GM12878 (cell line): ENCODE measurements at regions of chr1 and their contacts with region 1.

Region 1: DNA sequence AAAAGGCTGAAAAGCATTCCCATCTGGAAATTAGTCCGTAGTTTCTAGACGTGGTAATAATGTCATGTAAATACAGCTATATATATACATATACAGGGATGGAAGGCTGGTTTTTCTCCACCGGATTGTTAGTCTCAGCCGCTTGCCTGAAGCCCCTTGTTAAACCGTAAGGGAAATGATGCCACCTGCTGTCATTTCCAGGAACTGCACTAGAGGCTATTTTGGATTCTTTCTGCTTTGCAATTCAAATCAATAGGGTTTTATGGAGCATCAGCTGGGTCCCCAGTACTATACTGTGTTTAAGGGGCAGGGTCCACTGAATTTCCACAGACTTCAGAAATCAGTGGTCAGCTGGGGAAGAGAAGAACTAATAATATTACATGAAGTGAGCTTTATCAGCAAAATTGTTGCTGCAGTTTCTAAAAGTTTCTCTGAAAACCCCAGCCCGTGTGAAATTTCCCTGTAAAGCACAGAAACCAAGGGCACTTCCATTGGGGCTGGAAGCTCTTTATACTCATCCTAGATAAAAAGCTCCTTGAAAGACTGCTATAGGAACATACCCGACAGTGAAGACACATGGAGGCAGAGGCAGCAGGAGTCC is 33.8 kb upstream of the MPZL1 start:
- DNase-seq: peak; percentile 80
- ATAC-seq: peak; percentile 90
- H3K4me3 ChIP-seq: no peak overlapping the region
- H3K27ac ChIP-seq: peak overlapping the region; percentile 30; the same call in 1 of the 2 replicates
- H3K4me1 ChIP-seq: peaks cover 9% of the 10 kb centered on the region
- H3K27me3 ChIP-seq: no peaks in the 10 kb centered on the region
- CTCF ChIP-seq: peak; percentile 83 to 94 (median 93)
- EP300 ChIP-seq: no peak
- POLR2A ChIP-seq: no peak
- RAD21 ChIP-seq: peak; percentile 99

Region 2: GRCh38 chr1:167553136-167554027 is 134.6 kb before region 1 on chr1 and contains the start of gene CREG1:
- CTCF ChIA-PET with region 1: interaction called, 71 read pairs
- POLR2A ChIA-PET with region 1: interaction called, 8 read pairs
- RAD21 ChIA-PET with region 1: interaction called, 13 read pairs
- SMC1A ChIA-PET with region 1: interaction called, 33 read pairs
- in situ Hi-C with region 1: no loop called
- intact Hi-C with region 1: loop called (anchors 1 kb)
- DNase-seq: no peak
- ATAC-seq: peak; percentile 97
- H3K4me3 ChIP-seq: peak within 1 kb of the TSS; percentile 72
- H3K27ac ChIP-seq: peak within 1 kb of the TSS; percentile 51
- H3K4me1 ChIP-seq: peaks cover 9% of the 10 kb centered on the region
- H3K27me3 ChIP-seq: no peaks in the 10 kb centered on the region
- CTCF ChIP-seq: no peak
- EP300 ChIP-seq: no peak
- POLR2A ChIP-seq: peak; percentile 93
- RAD21 ChIP-seq: no peak
- polyA plus RNA-seq, gene CREG1: 5.3 to 11.3 TPM

Region 3: DNA sequence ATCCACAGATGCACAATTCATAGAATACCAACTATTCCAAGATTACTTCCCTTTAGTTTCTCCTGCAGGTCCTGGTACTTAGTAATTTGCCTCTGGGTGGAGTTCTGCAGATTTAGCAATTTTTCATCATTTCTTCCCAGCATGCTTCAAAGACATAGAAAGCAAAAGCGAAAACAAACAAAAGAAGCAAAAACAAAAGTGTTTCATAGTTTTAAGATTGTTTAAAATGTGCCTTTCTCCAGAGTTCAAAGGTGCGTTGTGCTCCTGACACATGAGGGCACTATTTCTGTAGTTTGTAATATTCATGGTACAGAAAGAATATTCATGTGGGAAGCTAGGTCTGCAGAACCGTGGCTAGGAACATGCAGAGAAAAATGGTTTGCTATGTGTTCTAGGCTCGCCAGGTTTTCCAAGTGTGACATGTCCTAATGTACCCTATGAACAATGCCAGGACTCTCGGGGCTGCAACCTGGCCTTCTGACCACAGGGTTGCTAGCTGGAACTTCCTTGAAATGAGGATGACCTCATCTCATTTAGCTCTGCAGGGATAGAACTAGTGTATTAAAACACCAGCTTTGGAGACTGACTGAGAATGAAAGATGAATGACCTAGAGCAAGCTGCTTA is 88.0 kb before region 1 on chr1:
- CTCF ChIA-PET with region 1: interaction called, 255 read pairs
- POLR2A ChIA-PET with region 1: interaction called, 28 read pairs
- RAD21 ChIA-PET with region 1: interaction called, 182 read pairs
- SMC1A ChIA-PET with region 1: interaction called, 215 read pairs
- in situ Hi-C with region 1: loop called (anchors 5 kb)
- intact Hi-C with region 1: loop called (anchors 1 kb)
- DNase-seq: peak; percentile 79
- ATAC-seq: peak; percentile 93
- H3K4me3 ChIP-seq: peak overlapping the region; percentile 4; the same call in 1 of the 2 replicates
- H3K27ac ChIP-seq: peak overlapping the region; percentile 55
- H3K4me1 ChIP-seq: peaks cover 31% of the 10 kb centered on the region
- H3K27me3 ChIP-seq: no peaks in the 10 kb centered on the region
- CTCF ChIP-seq: peak; percentile 58 to 81 (median 80); a peak in 5 of 6 replicates
- EP300 ChIP-seq: no peak
- POLR2A ChIP-seq: no peak
- RAD21 ChIP-seq: peak; percentile 90

Region 4: DNA sequence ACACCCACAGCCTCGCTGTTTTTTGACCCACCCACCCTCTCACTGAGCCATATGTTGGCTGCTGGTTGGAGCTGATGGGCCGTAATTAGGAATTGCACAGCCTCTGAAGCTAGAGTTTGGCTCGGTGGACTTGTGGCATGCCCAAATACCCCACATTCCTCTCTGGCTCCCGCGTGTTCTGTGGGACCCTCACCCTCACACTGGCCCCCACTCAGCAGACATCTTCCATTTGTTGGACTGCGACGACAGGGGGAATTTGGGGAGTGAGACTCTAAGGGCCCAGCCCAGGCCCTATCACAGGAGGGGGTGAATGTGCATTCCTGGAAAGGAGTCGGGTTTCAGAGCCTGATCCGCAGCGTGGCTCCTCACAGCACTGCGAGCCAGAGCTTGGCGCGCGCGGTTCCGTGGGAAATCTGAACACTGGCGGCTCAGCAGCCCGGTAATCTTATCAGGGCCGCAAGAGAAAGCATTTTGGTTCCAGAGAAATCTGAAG is 52.8 kb before region 1 on chr1:
- CTCF ChIA-PET with region 1: interaction called, 67 read pairs
- POLR2A ChIA-PET with region 1: interaction called, 15 read pairs
- RAD21 ChIA-PET with region 1: interaction called, 61 read pairs
- SMC1A ChIA-PET with region 1: interaction called, 170 read pairs
- in situ Hi-C with region 1: no loop called
- intact Hi-C with region 1: loop called (anchors 2 kb)
- DNase-seq: no peak
- ATAC-seq: no peak
- H3K4me3 ChIP-seq: peak overlapping the region; percentile 41; the same call in 1 of the 2 replicates
- H3K27ac ChIP-seq: 0 out of 2 replicates have a peak overlapping the region, but pooled peaks have one; percentile 79
- H3K4me1 ChIP-seq: peaks cover 43% of the 10 kb centered on the region
- H3K27me3 ChIP-seq: no peaks in the 10 kb centered on the region
- CTCF ChIP-seq: no peak
- EP300 ChIP-seq: no peak
- POLR2A ChIP-seq: no peak
- RAD21 ChIP-seq: no peak

Region 5: GRCh38 chr1:167676205-167676915 is 11.7 kb before region 1 on chr1:
- CTCF ChIA-PET with region 1: interaction called, 31 read pairs
- POLR2A ChIA-PET with region 1: interaction called, 3 read pairs
- RAD21 ChIA-PET with region 1: interaction called, 15 read pairs
- SMC1A ChIA-PET with region 1: interaction called, 37 read pairs
- in situ Hi-C with region 1: no loop called
- intact Hi-C with region 1: no loop called
- DNase-seq: peak; percentile 88
- ATAC-seq: peak; percentile 76
- H3K4me3 ChIP-seq: peak overlapping the region; percentile 35; the same call in 1 of the 2 replicates
- H3K27ac ChIP-seq: peak overlapping the region; percentile 93
- H3K4me1 ChIP-seq: peaks cover 85% of the 10 kb centered on the region
- H3K27me3 ChIP-seq: no peaks in the 10 kb centered on the region
- CTCF ChIP-seq: peak in 2 of 3 experiments; percentile 5 to 12; a peak in 2 of 6 replicates
- EP300 ChIP-seq: peak; percentile 10 to 11; a peak in 1 of 4 replicates
- POLR2A ChIP-seq: no peak
- RAD21 ChIP-seq: no peak

Region 6: GRCh38 chr1:167715157-167715999 is 27.4 kb after region 1 on chr1:
- CTCF ChIA-PET with region 1: interaction called, 18 read pairs
- POLR2A ChIA-PET with region 1: no interaction called
- RAD21 ChIA-PET with region 1: interaction called, 7 read pairs
- SMC1A ChIA-PET with region 1: interaction called, 6 read pairs
- in situ Hi-C with region 1: no loop called
- intact Hi-C with region 1: no loop called
- DNase-seq: peak; percentile 97
- ATAC-seq: peak; percentile 40
- H3K4me3 ChIP-seq: peak overlapping the region; percentile 95
- H3K27ac ChIP-seq: peak overlapping the region; percentile 98
- H3K4me1 ChIP-seq: peaks cover 24% of the 10 kb centered on the region
- H3K27me3 ChIP-seq: no peaks in the 10 kb centered on the region
- CTCF ChIP-seq: peak; percentile 72 to 99 (median 80)
- EP300 ChIP-seq: 0 out of 4 replicates have a peak, but pooled peaks of 1 of the 2 experiments have one; percentile 60
- POLR2A ChIP-seq: no peak
- RAD21 ChIP-seq: peak; percentile 43; the same call in 1 of the 2 replicates